ENCODE measurements at regions of chr1 and their contacts with region 1.

Region 1: DNA sequence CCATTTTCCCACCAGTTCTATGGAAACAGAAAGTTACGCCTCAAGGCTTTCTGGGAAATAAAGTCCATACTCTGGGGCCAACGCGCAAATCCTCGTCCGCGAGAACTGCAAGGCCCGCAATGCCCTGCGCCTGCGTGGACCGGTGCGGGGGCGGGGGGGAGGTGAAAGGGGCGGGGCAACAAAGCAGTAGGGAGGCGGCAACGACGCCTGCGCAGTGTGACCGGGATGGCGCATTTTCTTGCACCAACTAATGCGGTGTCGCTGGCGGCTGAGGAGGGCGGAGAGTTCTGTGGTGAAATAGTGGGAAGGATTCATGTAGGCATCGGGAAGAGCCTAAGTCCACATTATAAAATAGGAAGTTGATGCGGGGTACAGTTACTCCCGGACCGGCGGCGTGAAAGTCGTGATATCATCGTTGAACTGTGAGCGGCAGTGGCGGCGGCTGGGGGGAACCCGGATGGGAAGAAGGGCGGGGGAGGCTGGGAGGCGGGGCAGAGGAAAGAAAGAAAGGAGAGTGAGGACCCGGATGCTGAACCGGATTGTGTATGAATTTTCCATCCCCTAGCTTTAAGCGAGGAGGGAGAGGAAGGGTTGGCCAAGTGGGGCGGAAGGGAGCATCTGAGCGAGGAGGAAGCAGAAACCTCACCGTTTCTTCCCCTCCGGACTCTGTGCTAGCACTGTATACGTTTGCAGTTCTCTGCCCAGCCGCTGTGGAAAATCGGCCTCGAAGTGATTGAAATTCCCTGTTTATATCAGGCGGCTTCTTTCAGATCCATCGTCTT is at the start of gene GGPS1:
- DNase-seq: peak; percentile 100
- ATAC-seq: peak; percentile 84
- H3K4me3 ChIP-seq: peak within 1 kb of the TSS; percentile 78
- H3K27ac ChIP-seq: peak within 1 kb of the TSS; percentile 94
- H3K4me1 ChIP-seq: no peaks in the 10 kb centered on the region; the same call in 1 of the 2 replicates
- H3K27me3 ChIP-seq: no peaks in the 10 kb centered on the region
- CTCF ChIP-seq: peak; percentile 26; the same call in 1 of the 2 replicates
- POLR2A ChIP-seq: peak; percentile 87
- RAD21 ChIP-seq: no peak
- total RNA-seq, gene GGPS1: 21.5 and 23.1 TPM in 2 replicates

Region 2: GRCh38 chr1:235253219-235253962 is 75.2 kb before region 1 on chr1:
- CTCF ChIA-PET with region 1: interaction called, 3 read pairs
- POLR2A ChIA-PET with region 1: no interaction called
- dilution Hi-C with region 1: no loop called
- in situ Hi-C with region 1: no loop called
- intact Hi-C with region 1: loop called (anchors 1 kb)
- DNase-seq: peak; percentile 72
- ATAC-seq: peak; percentile 100
- H3K4me3 ChIP-seq: no peak overlapping the region
- H3K27ac ChIP-seq: no peak overlapping the region
- H3K4me1 ChIP-seq: no peaks in the 10 kb centered on the region; the same call in 1 of the 2 replicates
- H3K27me3 ChIP-seq: no peaks in the 10 kb centered on the region
- CTCF ChIP-seq: peak; percentile 84
- POLR2A ChIP-seq: no peak
- RAD21 ChIP-seq: peak; percentile 90

Region 3: DNA sequence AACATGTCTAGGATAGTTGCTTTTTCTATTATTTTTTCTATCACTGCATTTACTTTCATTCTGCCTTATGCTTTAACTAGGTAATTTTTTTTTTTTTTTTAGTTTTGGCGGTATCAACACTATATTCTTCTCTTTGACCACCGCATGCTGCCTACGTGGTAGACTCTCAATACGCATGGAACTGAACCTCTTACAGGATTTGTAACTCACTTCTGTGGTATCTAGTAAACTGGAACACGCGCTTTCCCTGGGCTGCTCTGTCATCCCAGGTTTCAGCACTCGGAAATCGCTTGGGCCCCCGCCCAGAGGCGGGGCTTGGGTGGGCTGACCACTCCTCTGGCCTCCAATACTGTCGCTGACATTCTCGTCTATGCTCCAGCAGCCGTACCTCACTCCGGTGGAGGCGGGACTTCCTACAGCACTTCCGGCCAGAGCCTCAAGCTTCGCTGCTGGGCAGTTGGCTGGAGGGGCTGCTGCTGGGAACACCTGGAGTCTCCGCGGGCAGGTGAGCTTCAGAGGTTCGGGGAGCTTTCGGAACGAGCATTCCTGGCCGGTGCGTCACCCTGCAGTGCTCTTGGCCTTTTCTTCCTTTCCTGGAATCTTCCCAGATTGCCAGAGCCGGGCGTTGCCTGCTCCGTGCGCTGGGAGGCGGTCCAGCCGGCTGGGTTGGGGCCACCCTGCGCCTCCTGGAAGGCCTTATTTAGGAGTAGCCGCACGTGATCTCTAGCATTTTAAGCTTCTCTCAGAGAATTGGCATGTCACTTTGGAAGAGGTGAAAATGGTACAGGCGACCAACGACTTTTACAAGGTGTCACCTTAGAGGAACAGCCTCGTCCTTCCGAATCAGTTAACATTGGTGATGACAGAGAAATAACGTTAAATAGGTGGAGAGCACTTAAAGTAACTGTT is 38.7 kb after region 1 on chr1 and contains the start of gene TBCE:
- CTCF ChIA-PET with region 1: no interaction called
- POLR2A ChIA-PET with region 1: no interaction called
- dilution Hi-C with region 1: no loop called
- in situ Hi-C with region 1: no loop called
- intact Hi-C with region 1: loop called (anchors 1 kb)
- DNase-seq: peak; percentile 98
- ATAC-seq: peak; percentile 100
- H3K4me3 ChIP-seq: peak within 1 kb of the TSS; percentile 92
- H3K27ac ChIP-seq: peak within 1 kb of the TSS; percentile 84
- H3K4me1 ChIP-seq: 0 out of 2 replicates have a peak, but pooled peaks cover 2% of the 10 kb centered on the region
- H3K27me3 ChIP-seq: no peaks in the 10 kb centered on the region
- CTCF ChIP-seq: no peak
- POLR2A ChIP-seq: peak; percentile 82; the same call in 1 of the 2 replicates
- RAD21 ChIP-seq: peak; percentile 5; the same call in 1 of the 2 replicates
- total RNA-seq, gene TBCE: 26.7 and 33.1 TPM in 2 replicates

Region 4: DNA sequence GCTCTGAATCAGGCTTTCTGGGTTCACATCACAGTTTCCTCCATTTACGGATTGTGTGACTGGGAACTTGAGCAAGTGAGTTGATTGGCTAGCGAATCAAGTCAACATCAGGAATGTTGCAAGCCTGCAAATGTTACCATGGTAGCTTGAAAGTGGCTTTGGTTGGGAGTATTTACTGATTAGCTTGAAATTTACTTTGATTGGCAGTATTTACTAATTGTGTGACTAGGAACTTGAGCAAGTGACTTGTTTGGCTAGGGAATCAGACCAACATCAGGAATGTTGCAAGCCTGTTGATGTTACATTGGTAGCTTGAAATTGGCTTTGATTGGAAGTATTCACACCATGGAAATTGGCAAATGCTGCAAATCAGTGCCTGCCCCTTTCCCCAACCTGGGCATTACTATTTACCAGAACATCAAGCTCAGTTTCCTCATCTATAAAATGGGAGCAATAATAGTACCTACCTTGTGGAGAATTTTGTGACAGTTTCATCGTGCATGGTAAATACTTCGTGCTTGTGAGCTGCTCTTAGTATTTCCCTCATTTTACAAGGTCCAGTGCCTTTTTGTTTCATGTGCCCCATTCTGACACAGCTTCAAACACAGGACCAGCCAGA is 198.8 kb after region 1 on chr1:
- CTCF ChIA-PET with region 1: no interaction called
- POLR2A ChIA-PET with region 1: no interaction called
- dilution Hi-C with region 1: no loop called
- in situ Hi-C with region 1: no loop called
- intact Hi-C with region 1: no loop called
- DNase-seq: no peak
- ATAC-seq: no peak
- H3K4me3 ChIP-seq: no peak overlapping the region
- H3K27ac ChIP-seq: no peak overlapping the region
- H3K4me1 ChIP-seq: no peaks in the 10 kb centered on the region
- H3K27me3 ChIP-seq: no peaks in the 10 kb centered on the region
- CTCF ChIP-seq: no peak
- POLR2A ChIP-seq: no peak
- RAD21 ChIP-seq: no peak

Region 5: DNA sequence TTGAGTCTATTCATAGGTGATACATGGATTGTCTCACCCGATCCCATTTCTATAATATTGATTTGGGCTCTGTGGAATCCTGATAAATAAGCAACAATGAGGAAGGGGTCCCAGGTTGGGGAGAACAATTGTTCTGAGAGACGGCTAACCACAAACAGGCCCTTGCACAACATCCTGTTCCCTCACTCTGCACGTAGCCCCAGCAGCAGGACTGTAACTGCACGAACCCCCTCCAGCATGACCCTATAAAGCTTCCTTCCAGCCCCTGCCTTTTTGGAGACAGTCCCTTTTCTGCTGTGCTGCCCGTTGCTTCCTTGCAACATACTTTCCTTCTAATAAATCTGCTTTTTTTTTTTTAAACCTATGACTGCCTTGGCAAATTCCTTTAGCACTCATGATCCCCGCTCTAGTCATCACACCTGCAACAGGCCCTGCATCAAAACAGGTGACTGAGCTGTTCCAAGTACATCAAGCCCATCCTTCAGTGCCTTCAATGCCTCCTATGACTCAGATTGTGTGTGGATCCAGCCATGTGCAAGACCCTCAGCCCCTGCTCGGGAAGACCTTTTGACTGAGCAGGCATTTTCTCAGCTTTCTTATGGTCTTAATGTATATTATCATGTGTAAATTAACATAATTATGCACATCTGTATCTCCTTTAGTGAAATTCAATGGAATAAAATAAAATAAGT is 239.4 kb after region 1 on chr1:
- CTCF ChIA-PET with region 1: no interaction called
- POLR2A ChIA-PET with region 1: no interaction called
- dilution Hi-C with region 1: no loop called
- in situ Hi-C with region 1: no loop called
- intact Hi-C with region 1: no loop called
- DNase-seq: no peak
- ATAC-seq: no peak
- H3K4me3 ChIP-seq: no peak overlapping the region
- H3K27ac ChIP-seq: no peak overlapping the region
- H3K4me1 ChIP-seq: no peaks in the 10 kb centered on the region
- H3K27me3 ChIP-seq: peaks cover 2% of the 10 kb centered on the region
- CTCF ChIP-seq: no peak
- POLR2A ChIP-seq: no peak
- RAD21 ChIP-seq: no peak

Measured in IMR-90 (cell line).